Gastrocnemius medialis (tissue), 4 donors: ENCODE measurements at regions of chr18 and their contacts with region 1.

Region 1: GRCh38 chr18:7566567-7567473 is at the start of gene PTPRM:
- DNase-seq: peak; percentile 93 to 95
- ATAC-seq: peak; percentile 76
- H3K4me3 ChIP-seq: peak within 1 kb of the TSS; percentile 75 to 98 (median 90)
- H3K27ac ChIP-seq: peak within 1 kb of the TSS; percentile 96 to 97 (median 96)
- H3K4me1 ChIP-seq: peaks cover 23 to 30% of the 10 kb centered on the region in 2 donors
- H3K27me3 ChIP-seq: no peaks in the 10 kb centered on the region
- CTCF ChIP-seq: peak in 4 of 5 experiments; percentile 76 to 92 (median 86)
- POLR2A ChIP-seq: peak; percentile 97
- total RNA-seq, gene PTPRM: 52.6 to 79.3 (median 63.8) TPM

Region 2: GRCh38 chr18:7272311-7273049 is 294.3 kb before region 1 on chr18:
- in situ Hi-C with region 1: no loop called
- intact Hi-C with region 1: loop called (anchors 1 kb)
- DNase-seq: peak; percentile 22 to 56
- ATAC-seq: peak; percentile 74 to 79
- H3K4me3 ChIP-seq: peak overlapping the region in 3 of 4 donors; percentile 8 to 26 (median 25)
- H3K27ac ChIP-seq: peak overlapping the region; percentile 56 to 78 (median 68)
- H3K4me1 ChIP-seq: peaks cover 0 to 5% of the 10 kb centered on the region in 2 donors
- H3K27me3 ChIP-seq: no peaks in the 10 kb centered on the region
- CTCF ChIP-seq: peak; percentile 10 to 67 (median 40)
- POLR2A ChIP-seq: no peak

Region 3: DNA sequence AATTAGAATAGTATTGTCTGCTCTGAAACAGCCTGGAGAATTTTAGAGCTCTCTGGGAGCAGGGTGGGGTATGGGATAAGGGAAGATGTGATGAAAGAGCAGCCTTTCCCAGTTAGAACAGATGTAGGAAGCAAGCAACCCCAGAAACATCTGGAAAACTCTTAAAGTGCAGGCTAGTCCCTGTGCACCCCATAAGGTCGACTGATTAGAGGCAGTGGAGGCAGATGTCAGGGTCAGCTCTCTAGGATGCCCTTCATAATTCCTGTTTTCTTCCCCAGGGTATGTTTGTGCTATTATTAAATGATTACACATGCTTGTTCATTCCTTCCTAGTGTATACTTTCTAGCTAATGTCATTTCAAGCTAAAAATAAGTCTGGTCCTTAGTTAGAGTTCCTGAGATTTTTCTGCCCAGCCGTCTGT is 42.0 kb after region 1 on chr18:
- in situ Hi-C with region 1: no loop called
- intact Hi-C with region 1: loop called (anchors 1 kb)
- DNase-seq: no peak
- ATAC-seq: peak; percentile 71 to 79
- H3K4me3 ChIP-seq: no peak overlapping the region
- H3K27ac ChIP-seq: peak overlapping the region; percentile 75 to 88 (median 82)
- H3K4me1 ChIP-seq: peaks cover 68 to 81% of the 10 kb centered on the region in 2 donors
- H3K27me3 ChIP-seq: no peaks in the 10 kb centered on the region
- CTCF ChIP-seq: no peak
- POLR2A ChIP-seq: no peak

Region 4: DNA sequence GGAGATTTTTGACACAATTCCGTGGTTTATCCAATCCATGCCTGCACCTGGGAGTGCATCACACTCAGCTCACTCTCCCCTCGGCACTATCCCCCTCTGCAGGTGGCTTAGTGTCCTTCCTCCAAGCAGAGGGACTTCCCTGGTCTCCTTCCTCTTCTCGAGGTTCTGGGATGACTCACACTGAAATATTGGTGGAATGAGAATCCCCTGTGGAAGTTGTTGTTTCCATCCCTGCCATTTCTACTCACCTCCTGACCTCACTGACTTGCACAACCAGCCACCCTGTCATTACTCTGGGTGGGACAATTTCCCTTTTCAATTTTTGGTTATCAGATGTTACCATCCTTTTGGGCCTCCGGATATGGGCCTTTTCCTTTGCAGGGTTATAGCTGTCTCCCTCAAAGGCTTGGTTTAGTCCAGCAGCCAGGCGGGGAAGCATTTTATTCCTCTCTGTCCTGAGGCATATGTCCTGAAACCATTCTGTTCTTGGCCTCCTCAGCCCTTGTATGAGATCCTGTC is 60.2 kb after region 1 on chr18:
- in situ Hi-C with region 1: no loop called
- intact Hi-C with region 1: no loop called
- DNase-seq: no peak
- ATAC-seq: peak; percentile 55 to 60
- H3K4me3 ChIP-seq: no peak overlapping the region
- H3K27ac ChIP-seq: peak overlapping the region in 3 of 4 donors; percentile 0 to 27 (median 13)
- H3K4me1 ChIP-seq: peaks cover 49 to 53% of the 10 kb centered on the region in 2 donors
- H3K27me3 ChIP-seq: no peaks in the 10 kb centered on the region
- CTCF ChIP-seq: no peak
- POLR2A ChIP-seq: no peak

Region 5: GRCh38 chr18:7755753-7756475 is 189.1 kb after region 1 on chr18:
- in situ Hi-C with region 1: no loop called
- intact Hi-C with region 1: loop called (anchors 5 kb)
- DNase-seq: no peak
- ATAC-seq: peak; percentile 59 to 76
- H3K4me3 ChIP-seq: no peak overlapping the region
- H3K27ac ChIP-seq: peak overlapping the region in 1 of 4 donors; percentile 21
- H3K4me1 ChIP-seq: peaks cover 52 to 70% of the 10 kb centered on the region in 2 donors
- H3K27me3 ChIP-seq: no peaks in the 10 kb centered on the region
- CTCF ChIP-seq: peak in 3 of 5 experiments; percentile 19 to 41 (median 37)
- POLR2A ChIP-seq: no peak

Region 6: DNA sequence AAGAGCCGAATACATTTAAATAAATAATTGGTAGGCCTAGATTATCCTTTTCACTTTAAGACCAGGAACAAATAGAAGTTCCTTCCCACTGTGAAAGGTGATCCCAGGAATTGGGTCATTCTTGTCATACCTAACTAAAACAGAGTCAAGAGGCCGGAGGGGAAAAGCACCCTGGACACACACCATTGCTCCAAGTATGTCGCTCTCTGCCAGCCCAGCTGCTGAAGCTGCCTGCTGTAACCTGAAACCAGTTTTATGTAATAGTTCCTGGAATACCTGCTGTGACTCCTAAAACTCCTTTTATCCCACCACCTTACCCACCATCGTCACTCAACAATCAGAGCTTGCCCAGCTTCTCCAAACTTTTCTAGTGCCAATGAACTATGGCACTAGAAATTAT is 217.4 kb after region 1 on chr18:
- in situ Hi-C with region 1: no loop called
- intact Hi-C with region 1: no loop called
- DNase-seq: peak in 1 of 2 donors; percentile 25
- ATAC-seq: peak in 1 of 2 donors; percentile 58
- H3K4me3 ChIP-seq: no peak overlapping the region
- H3K27ac ChIP-seq: no peak overlapping the region
- H3K4me1 ChIP-seq: peaks cover 14 to 19% of the 10 kb centered on the region in 2 donors
- H3K27me3 ChIP-seq: no peaks in the 10 kb centered on the region
- CTCF ChIP-seq: no peak
- POLR2A ChIP-seq: no peak

Region 7: GRCh38 chr18:8140841-8141501 is 574.2 kb after region 1 on chr18:
- in situ Hi-C with region 1: no loop called
- intact Hi-C with region 1: loop called (anchors 5 kb)
- DNase-seq: peak; percentile 83 to 85
- ATAC-seq: peak; percentile 85 to 88
- H3K4me3 ChIP-seq: peak overlapping the region in 1 of 4 donors; percentile 7
- H3K27ac ChIP-seq: peak overlapping the region; percentile 64 to 93 (median 79)
- H3K4me1 ChIP-seq: peaks cover 30 to 45% of the 10 kb centered on the region in 2 donors
- H3K27me3 ChIP-seq: no peaks in the 10 kb centered on the region
- CTCF ChIP-seq: no peak
- POLR2A ChIP-seq: peak in 1 of 2 donors; percentile 53

Region 8: DNA sequence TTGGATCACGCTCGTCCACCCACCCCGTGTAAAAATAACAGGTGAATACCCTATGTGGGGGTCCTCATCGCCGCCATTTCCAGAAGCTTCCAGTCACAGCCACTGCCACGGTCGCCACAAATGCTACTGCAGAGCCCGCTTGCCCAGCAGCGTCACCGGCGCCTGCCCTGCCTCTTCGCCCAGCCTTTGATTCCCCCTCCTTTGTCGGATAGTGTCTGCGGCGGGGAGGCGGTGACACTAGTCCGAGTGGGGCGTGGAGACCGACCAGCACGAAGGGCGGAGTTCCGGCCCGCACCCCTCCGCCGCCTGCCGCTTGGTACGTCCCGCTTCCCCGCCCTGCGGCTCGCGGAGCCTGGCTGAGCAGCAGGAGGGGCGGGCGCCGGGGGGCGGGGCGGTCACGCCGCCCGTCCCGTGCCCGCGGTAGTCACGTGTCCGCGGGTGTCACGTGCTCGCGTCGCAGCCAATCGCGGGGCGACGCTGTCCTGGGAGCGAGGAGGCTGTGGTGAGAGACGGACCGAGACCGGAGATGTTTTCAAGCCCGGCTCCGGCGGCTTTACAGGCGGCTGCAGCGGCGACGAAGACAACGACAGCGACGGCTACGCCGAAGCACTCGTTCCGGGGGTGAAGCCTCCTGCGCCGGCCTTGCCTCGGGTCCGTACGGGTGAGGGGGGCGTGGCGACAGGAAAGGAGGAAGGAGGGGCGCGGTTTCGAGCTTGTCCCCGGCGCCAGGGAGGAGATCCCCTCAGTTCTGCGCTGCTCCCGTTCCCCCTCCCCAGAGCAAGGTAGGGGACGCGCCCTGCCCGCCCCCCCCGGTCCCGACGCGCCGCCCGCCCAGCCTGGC is 1569.7 kb after region 1 on chr18 and contains the start of gene ANKRD12:
- in situ Hi-C with region 1: no loop called
- intact Hi-C with region 1: loop called (anchors 10 kb)
- DNase-seq: peak; percentile 96 to 97
- ATAC-seq: peak; percentile 72 to 75
- H3K4me3 ChIP-seq: peak within 1 kb of the TSS; percentile 83 to 89 (median 86)
- H3K27ac ChIP-seq: peak within 1 kb of the TSS; percentile 97 to 98 (median 98)
- H3K4me1 ChIP-seq: peaks cover 58 to 64% of the 10 kb centered on the region in 2 donors
- H3K27me3 ChIP-seq: no peaks in the 10 kb centered on the region
- CTCF ChIP-seq: peak in 1 of 5 experiments; percentile 14
- POLR2A ChIP-seq: peak; percentile 93 to 94
- total RNA-seq, gene ANKRD12: 26.9 to 40.1 (median 36.7) TPM